CD8-positive, alpha-beta T cell (primary cell): ENCODE measurements at regions of chr12 and their contacts with region 1.

Region 1: DNA sequence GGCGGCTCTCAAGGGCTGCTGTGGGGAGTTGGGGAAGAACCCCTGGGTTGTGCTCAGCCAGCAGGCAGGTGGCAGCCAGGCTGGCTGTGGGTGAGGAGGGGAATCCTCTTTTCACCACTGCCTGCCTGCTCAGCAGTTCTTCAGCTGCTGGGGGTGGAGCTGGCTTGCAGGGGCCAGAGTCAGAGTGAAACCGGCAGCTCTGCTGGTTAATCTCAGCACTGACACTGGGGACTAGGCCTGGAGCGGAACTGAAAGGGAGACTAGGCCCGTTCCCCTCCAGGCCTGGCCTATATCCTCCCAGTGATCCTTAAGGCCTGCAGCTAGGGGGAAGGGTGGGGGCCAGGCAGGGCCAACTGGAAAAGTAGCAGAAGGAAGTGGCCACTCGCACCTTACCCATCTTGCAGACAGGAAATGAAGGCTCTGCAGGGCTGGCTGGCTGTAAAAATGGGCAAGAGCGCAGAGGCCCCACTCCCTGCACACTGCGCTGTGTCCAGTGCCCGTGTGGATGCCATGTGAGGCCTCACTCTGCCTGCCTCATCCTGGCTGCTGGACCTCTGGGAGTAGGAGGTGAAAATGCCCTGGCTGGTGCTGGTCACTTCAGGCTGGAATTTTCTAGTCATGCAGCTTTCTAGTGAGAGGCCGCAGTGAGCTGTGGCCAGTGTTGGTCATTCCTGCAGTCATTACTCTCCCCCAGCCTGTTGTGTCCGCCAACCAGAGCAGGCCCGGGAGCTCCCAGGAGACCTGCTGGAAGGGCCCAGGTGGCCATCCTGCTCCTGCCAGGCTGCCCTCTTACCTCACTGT is 39.4 kb downstream of the SH2B3 start:
- DNase-seq: peak; percentile 59 to 95 (median 75)
- ATAC-seq: peak; percentile 96
- H3K4me3 ChIP-seq: peak overlapping the region; percentile 10 to 22
- H3K4me3 Mint-ChIP-seq: peak overlapping the region; percentile 66
- H3K27ac ChIP-seq: peak overlapping the region; percentile 38 to 81
- H3K27ac Mint-ChIP-seq: peak overlapping the region; percentile 90
- H3K4me1 ChIP-seq: peaks cover 44% of the 10 kb centered on the region
- H3K4me1 Mint-ChIP-seq: peaks cover 65% of the 10 kb centered on the region
- H3K27me3 ChIP-seq: no peaks in the 10 kb centered on the region
- H3K27me3 Mint-ChIP-seq: no peaks in the 10 kb centered on the region
- CTCF ChIP-seq: no peak

Region 2: DNA sequence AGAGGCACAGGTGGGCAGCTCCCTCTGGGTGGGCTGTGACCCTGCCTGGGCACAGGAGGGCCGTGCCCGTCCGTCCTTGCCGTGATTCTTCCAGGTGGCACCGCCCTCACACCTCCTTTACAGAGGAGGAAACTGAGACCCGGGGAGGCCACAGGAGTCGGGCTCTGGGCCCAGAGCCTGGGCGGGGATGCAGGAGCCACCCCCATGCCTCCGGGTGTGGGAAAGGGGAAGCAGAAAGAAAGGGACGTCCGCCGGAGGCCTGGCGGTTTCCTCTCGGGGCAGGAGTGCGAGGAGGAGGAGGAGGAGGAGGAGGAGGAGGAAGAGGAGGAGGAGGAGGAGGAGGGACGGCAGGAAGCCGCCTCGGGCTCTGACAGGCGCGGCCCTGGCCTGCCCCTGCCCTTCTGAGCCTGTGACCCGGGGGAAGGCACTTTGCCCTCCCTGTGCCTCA is 16.4 kb before region 1 on chr12:
- CTCF ChIA-PET with region 1: interaction called, 47 read pairs
- POLR2A ChIA-PET with region 1: interaction called, 26 read pairs
- intact Hi-C with region 1: loop called in 1 of 2 experiments (anchors 2 kb)
- DNase-seq: peak in 2 of 9 experiments; percentile 39 to 58
- ATAC-seq: no peak
- H3K4me3 ChIP-seq: peak overlapping the region in 1 of 2 experiments; percentile 24
- H3K4me3 Mint-ChIP-seq: peak overlapping the region; percentile 49
- H3K27ac ChIP-seq: peak overlapping the region in 1 of 2 experiments; percentile 98
- H3K27ac Mint-ChIP-seq: peak overlapping the region; percentile 83
- H3K4me1 ChIP-seq: peaks cover 98% of the 10 kb centered on the region
- H3K4me1 Mint-ChIP-seq: peaks cover 82% of the 10 kb centered on the region
- H3K27me3 ChIP-seq: no peaks in the 10 kb centered on the region
- H3K27me3 Mint-ChIP-seq: no peaks in the 10 kb centered on the region
- CTCF ChIP-seq: no peak

Region 3: GRCh38 chr12:111434680-111435338 is 10.3 kb before region 1 on chr12:
- CTCF ChIA-PET with region 1: interaction called, 77 read pairs
- POLR2A ChIA-PET with region 1: interaction called, 38 read pairs
- intact Hi-C with region 1: loop called (anchors 1 to 2 kb)
- DNase-seq: peak; percentile 70 to 96 (median 87)
- ATAC-seq: peak; percentile 70
- H3K4me3 ChIP-seq: peak overlapping the region; percentile 34 to 39
- H3K4me3 Mint-ChIP-seq: peak overlapping the region; percentile 82
- H3K27ac ChIP-seq: peak overlapping the region; percentile 91 to 98
- H3K27ac Mint-ChIP-seq: peak overlapping the region; percentile 100
- H3K4me1 ChIP-seq: peaks cover 99% of the 10 kb centered on the region
- H3K4me1 Mint-ChIP-seq: peaks cover 93% of the 10 kb centered on the region
- H3K27me3 ChIP-seq: no peaks in the 10 kb centered on the region
- H3K27me3 Mint-ChIP-seq: no peaks in the 10 kb centered on the region
- CTCF ChIP-seq: no peak

Region 4: GRCh38 chr12:111467092-111467856 is 22.1 kb after region 1 on chr12:
- CTCF ChIA-PET with region 1: no interaction called
- POLR2A ChIA-PET with region 1: no interaction called
- intact Hi-C with region 1: no loop called
- DNase-seq: no peak
- ATAC-seq: no peak
- H3K4me3 ChIP-seq: no peak overlapping the region
- H3K4me3 Mint-ChIP-seq: no peak overlapping the region
- H3K27ac ChIP-seq: no peak overlapping the region
- H3K27ac Mint-ChIP-seq: no peak overlapping the region
- H3K4me1 ChIP-seq: no peaks in the 10 kb centered on the region
- H3K4me1 Mint-ChIP-seq: no peaks in the 10 kb centered on the region
- H3K27me3 ChIP-seq: no peaks in the 10 kb centered on the region
- H3K27me3 Mint-ChIP-seq: no peaks in the 10 kb centered on the region
- CTCF ChIP-seq: no peak